Kidney (tissue), 22 donors: ENCODE measurements at regions of chr17 and their contacts with region 1.

Region 1: DNA sequence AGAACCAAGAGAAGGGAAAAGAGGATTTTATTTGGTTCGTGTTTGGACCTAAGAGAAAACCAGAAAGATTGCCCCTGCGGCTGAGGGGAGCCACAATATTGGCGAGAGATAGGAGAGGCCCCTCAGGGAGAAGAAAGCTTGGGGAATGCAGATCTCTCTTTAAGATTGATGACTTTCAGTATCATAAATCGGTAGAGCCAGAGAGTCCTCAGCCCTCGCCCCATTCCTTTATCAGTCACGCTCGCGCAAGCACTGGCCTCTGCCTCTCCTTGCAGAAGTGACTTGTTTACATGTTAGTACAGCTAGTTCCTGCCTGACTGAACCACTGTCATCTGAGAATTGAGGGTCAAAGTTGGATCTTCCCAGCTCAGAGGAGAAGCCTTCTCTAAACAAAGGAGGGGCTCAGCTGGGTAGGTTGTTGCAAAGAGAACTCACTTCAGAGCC is 21.5 kb upstream of the KRT19 start:
- DNase-seq: peak in 4 of 5 donors; percentile 71 to 85 (median 82)
- H3K4me3 ChIP-seq: no peak overlapping the region
- H3K27ac ChIP-seq: no peak overlapping the region
- H3K4me1 ChIP-seq: peaks cover 0 to 12% (median 7%) of the 10 kb centered on the region in 3 donors
- H3K27me3 ChIP-seq: no peaks in the 10 kb centered on the region
- CTCF ChIP-seq: no peak

Region 2: GRCh38 chr17:41665566-41666236 is 116.1 kb after region 1 on chr17:
- intact Hi-C with region 1: loop called (anchors 10 kb)
- DNase-seq: peak; percentile 88 to 96 (median 94)
- H3K4me3 ChIP-seq: peak overlapping the region; percentile 21 to 86 (median 70)
- H3K27ac ChIP-seq: peak overlapping the region; percentile 71 to 95
- H3K4me1 ChIP-seq: peaks cover 0 to 24% (median 0%) of the 10 kb centered on the region in 3 donors
- H3K27me3 ChIP-seq: no peaks in the 10 kb centered on the region
- CTCF ChIP-seq: peak; percentile 93

Region 3: GRCh38 chr17:41678907-41679739 is 129.5 kb after region 1 on chr17:
- intact Hi-C with region 1: no loop called
- DNase-seq: peak in 2 of 5 donors; percentile 46 to 62
- H3K4me3 ChIP-seq: peak overlapping the region in 2 of 3 donors; percentile 3 to 43
- H3K27ac ChIP-seq: peak overlapping the region; percentile 83 to 85
- H3K4me1 ChIP-seq: peaks cover 0 to 17% (median 15%) of the 10 kb centered on the region in 3 donors
- H3K27me3 ChIP-seq: no peaks in the 10 kb centered on the region
- CTCF ChIP-seq: peak; percentile 38